ENCODE measurements at regions of chr12 and their contacts with region 1.

Region 1: GRCh38 chr12:62192180-62192902 is 67.9 kb upstream of the USP15 start:
- DNase-seq: peak; percentile 85
- ATAC-seq: peak; percentile 89
- H3K4me3 ChIP-seq: peak overlapping the region; percentile 61
- H3K27ac ChIP-seq: no peak overlapping the region
- H3K4me1 ChIP-seq: peaks cover 23% of the 10 kb centered on the region
- H3K27me3 ChIP-seq: peaks cover 19% of the 10 kb centered on the region
- CTCF ChIP-seq: peak; percentile 88

Region 2: GRCh38 chr12:62006076-62006732 is 186.1 kb before region 1 on chr12:
- CTCF ChIA-PET with region 1: no interaction called
- POLR2A ChIA-PET with region 1: no interaction called
- intact Hi-C with region 1: loop called (anchors 2 kb)
- DNase-seq: peak; percentile 63
- ATAC-seq: no peak
- H3K4me3 ChIP-seq: no peak overlapping the region
- H3K27ac ChIP-seq: no peak overlapping the region
- H3K4me1 ChIP-seq: no peaks in the 10 kb centered on the region
- H3K27me3 ChIP-seq: no peaks in the 10 kb centered on the region
- CTCF ChIP-seq: peak; percentile 80

Region 3: DNA sequence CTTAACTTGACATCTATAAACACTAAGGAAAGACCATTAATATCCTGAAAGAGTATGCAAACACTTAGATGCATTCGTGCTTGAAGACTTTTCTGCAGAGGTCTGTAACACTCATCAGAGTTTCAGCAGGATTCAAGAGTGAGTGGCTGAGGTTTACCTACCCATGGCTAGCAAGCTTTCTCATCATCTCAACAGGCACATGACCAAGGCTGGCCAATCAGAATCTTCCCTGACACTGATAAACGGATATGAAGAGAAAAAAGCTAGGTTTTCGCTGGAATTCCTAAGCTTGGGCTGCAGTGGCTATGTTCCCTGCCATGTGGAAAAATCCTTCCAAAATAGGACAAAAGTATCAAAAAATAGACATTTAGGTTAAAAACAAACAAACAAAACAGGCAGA is 94.2 kb before region 1 on chr12:
- CTCF ChIA-PET with region 1: no interaction called
- POLR2A ChIA-PET with region 1: no interaction called
- intact Hi-C with region 1: no loop called
- DNase-seq: no peak
- ATAC-seq: no peak
- H3K4me3 ChIP-seq: no peak overlapping the region
- H3K27ac ChIP-seq: no peak overlapping the region
- H3K4me1 ChIP-seq: no peaks in the 10 kb centered on the region
- H3K27me3 ChIP-seq: peaks cover 14% of the 10 kb centered on the region; the same call in 1 of the 2 replicates
- CTCF ChIP-seq: no peak